ENCODE measurements at regions of chr20 and their contacts with region 1.

Region 1: DNA sequence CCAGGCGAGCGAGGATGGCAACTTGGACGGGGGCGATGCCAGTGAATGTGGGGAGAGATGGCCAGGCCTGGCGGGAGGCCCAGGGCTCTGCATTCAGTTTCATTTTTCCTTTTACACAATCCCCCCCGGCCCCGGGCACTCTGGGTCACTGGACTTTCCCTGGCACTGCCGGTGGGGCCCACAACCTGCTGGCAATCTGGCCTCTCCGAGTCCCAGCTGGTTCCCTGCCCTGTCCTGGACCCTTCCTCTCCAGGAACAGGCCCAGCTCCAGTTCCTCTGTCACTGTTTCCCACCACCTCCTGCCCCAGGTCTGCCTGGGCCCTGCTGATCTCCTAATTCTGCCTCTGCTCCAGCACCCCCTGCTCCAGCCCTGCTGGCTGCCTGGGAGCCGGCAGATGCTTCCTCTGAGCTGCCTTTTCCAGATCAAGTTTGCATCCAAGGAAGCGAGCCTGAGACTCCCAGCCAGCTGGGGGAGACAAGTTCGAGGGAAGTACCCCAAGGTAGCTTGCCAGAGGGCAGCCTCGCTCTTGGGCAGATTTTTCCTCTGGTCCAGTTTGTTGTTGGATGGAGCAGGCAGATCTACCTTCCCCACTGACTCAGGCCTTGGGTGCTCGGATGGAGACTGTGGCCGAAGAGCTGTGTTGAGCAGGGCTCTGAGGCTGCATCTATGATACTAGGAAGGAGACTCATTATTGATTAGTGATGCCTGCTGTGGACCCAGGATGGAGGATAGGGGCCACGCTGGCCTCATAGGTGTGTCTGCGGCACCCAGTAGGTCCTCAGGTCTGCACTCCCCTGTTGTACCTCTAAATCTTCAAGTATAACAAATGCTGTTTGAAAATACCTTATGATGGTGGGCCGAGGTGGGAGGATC is 83.2 kb downstream of the CEBPB start:
- DNase-seq: no peak
- ATAC-seq: peak; percentile 33
- H3K4me3 ChIP-seq: no peak overlapping the region
- H3K27ac ChIP-seq: no peak overlapping the region
- H3K4me1 ChIP-seq: peaks cover 8% of the 10 kb centered on the region
- H3K27me3 ChIP-seq: no peaks in the 10 kb centered on the region
- CTCF ChIP-seq: no peak

Region 2: GRCh38 chr20:50112512-50113353 is 161.1 kb before region 1 on chr20 and contains the start of gene UBE2V1:
- CTCF ChIA-PET with region 1: no interaction called
- POLR2A ChIA-PET with region 1: interaction called, 15 read pairs
- in situ Hi-C with region 1: no loop called
- intact Hi-C with region 1: no loop called
- DNase-seq: no peak
- ATAC-seq: peak; percentile 87
- H3K4me3 ChIP-seq: peak within 1 kb of the TSS; percentile 91 to 98
- H3K27ac ChIP-seq: peak within 1 kb of the TSS; percentile 99
- H3K4me1 ChIP-seq: peaks cover 57% of the 10 kb centered on the region
- H3K27me3 ChIP-seq: no peaks in the 10 kb centered on the region
- CTCF ChIP-seq: peak; percentile 58
- total RNA-seq, gene UBE2V1: 115 TPM

Region 3: DNA sequence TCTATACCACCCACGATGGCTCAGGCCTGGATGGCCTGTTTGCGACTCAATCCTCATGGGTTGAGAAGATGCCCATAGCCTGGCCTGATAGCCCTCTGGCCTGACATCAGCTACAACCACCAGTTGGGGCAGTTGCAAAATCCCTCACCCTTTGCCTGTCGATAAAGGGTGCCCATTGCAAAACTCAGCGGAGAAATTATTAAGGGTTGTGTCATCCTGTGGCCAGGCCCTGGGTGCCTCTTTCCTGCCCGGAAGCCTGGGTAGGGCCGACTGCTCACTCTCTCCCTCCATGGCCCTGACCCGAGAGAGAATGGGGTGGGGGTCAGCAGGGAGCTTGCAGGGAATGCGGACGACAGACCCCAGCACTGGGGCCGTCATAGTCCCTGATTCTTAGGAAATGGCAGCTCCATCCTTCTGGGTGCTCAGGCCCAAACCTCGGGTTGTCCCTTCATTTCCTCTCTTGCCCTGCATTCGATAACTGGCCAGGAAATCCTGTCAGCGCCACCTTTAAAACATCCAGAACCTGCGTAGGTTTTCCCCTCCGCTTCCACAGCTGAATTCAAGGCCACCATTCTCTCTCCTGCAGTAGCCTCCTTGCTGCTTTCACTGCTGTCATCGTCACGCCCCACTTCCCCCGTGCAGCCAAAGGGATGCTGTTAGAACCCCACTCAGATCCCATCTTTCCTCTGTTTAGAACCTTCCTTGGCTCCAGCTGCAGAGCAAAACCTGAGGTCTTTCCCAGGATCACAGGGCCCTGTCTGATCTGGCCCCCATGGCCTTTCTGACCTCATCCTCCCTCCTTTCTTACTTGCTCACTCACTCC is 52.1 kb before region 1 on chr20:
- CTCF ChIA-PET with region 1: no interaction called
- POLR2A ChIA-PET with region 1: no interaction called
- in situ Hi-C with region 1: no loop called
- intact Hi-C with region 1: no loop called
- DNase-seq: no peak
- ATAC-seq: no peak
- H3K4me3 ChIP-seq: no peak overlapping the region
- H3K27ac ChIP-seq: no peak overlapping the region
- H3K4me1 ChIP-seq: no peaks in the 10 kb centered on the region
- H3K27me3 ChIP-seq: no peaks in the 10 kb centered on the region
- CTCF ChIP-seq: no peak

Region 4: DNA sequence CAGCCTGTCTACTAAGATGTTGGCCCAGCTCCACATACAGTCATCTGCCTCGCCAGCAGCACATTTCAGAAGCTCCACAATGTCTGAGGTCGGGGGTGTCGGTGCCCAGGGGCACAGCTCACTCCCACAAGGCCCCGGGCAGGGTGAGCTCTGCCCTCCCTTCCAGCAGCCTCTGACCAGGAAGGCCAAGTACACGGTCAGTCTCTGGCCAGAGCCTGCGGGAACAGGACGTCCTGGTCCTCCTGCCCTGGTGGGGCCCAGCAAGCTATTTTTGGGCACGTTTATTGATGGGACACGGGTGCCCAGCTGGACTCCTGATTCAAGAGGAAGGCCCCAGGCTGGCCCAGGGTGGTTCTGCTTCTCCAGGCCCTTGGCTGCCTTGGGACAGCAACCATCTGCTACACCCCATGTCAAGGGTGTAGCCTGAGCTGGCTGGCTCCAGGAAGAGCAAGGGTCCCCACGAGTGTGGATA is 121.4 kb after region 1 on chr20:
- CTCF ChIA-PET with region 1: no interaction called
- POLR2A ChIA-PET with region 1: no interaction called
- in situ Hi-C with region 1: no loop called
- intact Hi-C with region 1: no loop called
- DNase-seq: no peak
- ATAC-seq: peak; percentile 28; the same call in 1 of the 2 replicates
- H3K4me3 ChIP-seq: no peak overlapping the region
- H3K27ac ChIP-seq: no peak overlapping the region
- H3K4me1 ChIP-seq: peaks cover 14% of the 10 kb centered on the region
- H3K27me3 ChIP-seq: no peaks in the 10 kb centered on the region
- CTCF ChIP-seq: no peak

Region 5: GRCh38 chr20:50844430-50845100 is 570.7 kb after region 1 on chr20:
- CTCF ChIA-PET with region 1: no interaction called
- POLR2A ChIA-PET with region 1: no interaction called
- in situ Hi-C with region 1: no loop called
- intact Hi-C with region 1: no loop called
- DNase-seq: no peak
- ATAC-seq: peak; percentile 88
- H3K4me3 ChIP-seq: no peak overlapping the region
- H3K27ac ChIP-seq: peak overlapping the region; percentile 36; the same call in 1 of the 2 replicates
- H3K4me1 ChIP-seq: peaks cover 30% of the 10 kb centered on the region
- H3K27me3 ChIP-seq: no peaks in the 10 kb centered on the region
- CTCF ChIP-seq: no peak